ENCODE measurements at regions of chr3 and their contacts with region 1.

Region 1: GRCh38 chr3:10142707-10143566 is 1.4 kb downstream of the VHL start:
- DNase-seq: no peak
- ATAC-seq: no peak
- H3K4me3 ChIP-seq: peak overlapping the region; percentile 51 to 95 (median 78)
- H3K27ac ChIP-seq: peak overlapping the region in 5 of 10 donors; percentile 84 to 97 (median 89)
- H3K4me1 ChIP-seq: peaks cover 3 to 53% (median 34%) of the 10 kb centered on the region in 9 donors
- H3K27me3 ChIP-seq: no peaks in the 10 kb centered on the region
- CTCF ChIP-seq: no peak

Region 2: DNA sequence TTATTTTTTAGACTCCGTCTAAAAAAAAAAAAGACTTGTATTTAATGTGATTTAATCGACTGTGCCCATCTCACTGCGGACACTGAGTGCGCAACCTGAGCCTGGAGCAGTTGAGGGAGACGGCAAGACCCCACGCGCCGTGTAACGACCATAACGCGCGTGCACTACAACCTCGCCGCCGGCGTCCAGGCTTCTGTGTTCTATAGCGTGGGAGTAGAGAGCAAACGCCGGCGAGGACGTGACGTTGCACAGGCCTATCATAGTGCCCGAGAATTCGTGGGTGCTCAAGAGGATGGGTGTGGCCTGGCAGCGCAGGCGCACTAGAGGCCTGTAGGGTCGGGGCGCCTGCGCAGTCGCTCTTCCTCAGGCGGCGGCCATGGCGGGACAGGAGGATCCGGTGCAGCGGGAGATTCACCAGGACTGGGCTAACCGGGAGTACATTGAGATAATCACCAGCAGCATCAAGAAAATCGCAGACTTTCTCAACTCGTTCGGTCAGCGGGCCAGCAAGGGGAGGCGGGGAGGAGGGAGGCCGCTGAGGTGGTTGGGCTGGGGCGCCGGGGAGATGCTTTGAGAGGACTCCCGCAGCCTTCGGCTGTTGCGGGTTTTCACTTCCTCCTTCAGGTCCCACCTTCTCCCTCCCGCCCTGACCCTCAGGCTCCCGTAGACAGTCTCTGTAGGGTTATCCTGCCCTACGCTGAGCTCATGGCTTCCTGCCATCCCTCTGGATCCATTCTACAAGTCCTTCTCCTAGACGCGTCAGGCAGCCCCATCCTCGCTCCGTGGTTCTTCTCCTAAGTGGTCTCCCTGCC is 27.4 kb before region 1 on chr3 and contains the start of gene BRK1:
- intact Hi-C with region 1: loop called in 1 of 10 experiments (anchors 1 kb)
- DNase-seq: peak; percentile 94 to 95
- ATAC-seq: peak; percentile 100
- H3K4me3 ChIP-seq: peak within 1 kb of the TSS; percentile 77 to 97 (median 84)
- H3K27ac ChIP-seq: peak within 1 kb of the TSS in 9 of 10 donors; percentile 66 to 90 (median 83)
- H3K4me1 ChIP-seq: peaks cover 3 to 44% (median 31%) of the 10 kb centered on the region in 9 donors
- H3K27me3 ChIP-seq: no peaks in the 10 kb centered on the region
- CTCF ChIP-seq: no peak
- total RNA-seq, gene BRK1: 80.3 to 101 (median 94.8) TPM

Region 3: DNA sequence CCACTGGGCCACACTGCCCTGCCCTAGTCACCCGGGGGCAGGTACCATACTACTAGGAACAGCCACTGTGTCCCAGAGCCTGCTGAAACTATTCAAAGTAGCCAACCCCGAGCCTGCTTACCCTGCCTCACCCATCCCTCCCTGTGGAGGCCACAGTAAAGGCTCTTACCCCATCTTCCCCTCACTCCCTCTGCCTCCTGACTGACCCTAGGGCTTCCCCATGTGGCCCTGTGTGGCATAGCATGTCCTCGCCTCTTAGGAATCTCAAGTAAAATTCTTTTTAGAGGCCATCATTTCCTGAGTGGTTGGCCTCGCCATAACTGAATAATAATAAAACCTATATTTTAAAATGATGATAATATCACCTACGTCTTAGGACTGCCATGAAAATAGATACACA is 560.9 kb after region 1 on chr3:
- intact Hi-C with region 1: no loop called
- DNase-seq: no peak
- ATAC-seq: no peak
- H3K4me3 ChIP-seq: no peak overlapping the region
- H3K27ac ChIP-seq: no peak overlapping the region
- H3K4me1 ChIP-seq: peaks cover 0 to 7% (median 0%) of the 10 kb centered on the region in 9 donors
- H3K27me3 ChIP-seq: peaks cover 20 to 91% (median 83%) of the 10 kb centered on the region in 7 donors
- CTCF ChIP-seq: peak in 2 of 9 donors; percentile 9 to 13